Transverse colon (tissue), 4 donors: ENCODE measurements at regions of chr19 and their contacts with region 1.

Region 1: DNA sequence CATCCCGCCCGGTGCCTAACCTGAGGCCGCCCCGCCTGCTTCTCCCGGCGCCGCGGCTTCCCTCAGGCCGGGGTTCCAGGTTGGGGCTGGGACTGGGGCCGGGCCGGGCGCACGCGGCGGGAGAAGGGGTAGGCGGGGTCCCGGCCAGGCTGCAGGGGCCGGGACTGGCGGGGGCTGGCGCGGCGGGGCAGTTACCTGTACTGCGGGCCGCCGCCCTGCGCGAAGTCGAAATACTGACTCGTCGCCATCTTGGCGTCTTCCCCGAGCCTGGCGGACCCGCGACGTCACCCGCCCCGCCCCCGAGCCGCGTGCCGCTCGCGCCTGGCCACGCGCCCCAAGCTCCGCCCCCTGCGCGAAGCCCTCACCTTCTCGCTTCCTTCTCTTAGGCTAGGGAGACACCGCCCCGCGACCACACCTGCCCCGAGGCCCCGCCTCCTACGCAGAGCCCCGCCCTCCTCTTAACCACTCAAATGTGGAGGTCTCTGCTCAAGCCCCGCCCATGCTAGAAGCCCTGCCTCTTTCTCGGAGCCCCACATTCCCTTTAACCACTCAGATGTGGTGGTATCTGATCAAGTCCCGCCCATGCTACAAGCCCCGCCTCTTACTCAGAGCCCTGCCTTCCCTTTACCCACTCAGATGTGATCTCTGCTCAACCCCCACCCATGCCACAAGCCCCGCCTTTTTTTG is at the start of gene ZFR2:
- DNase-seq: no peak
- H3K4me3 ChIP-seq: peak within 1 kb of the TSS in 1 of 4 donors; percentile 18
- H3K27ac ChIP-seq: no peak within 1 kb of the TSS
- H3K4me1 ChIP-seq: peaks cover 0 to 4% (median 0%) of the 10 kb centered on the region in 4 donors
- H3K27me3 ChIP-seq: peaks cover 57% of the 10 kb centered on the region
- CTCF ChIP-seq: no peak
- EP300 ChIP-seq: no peak
- POLR2A ChIP-seq: no peak
- total RNA-seq, gene ZFR2: not detected

Region 2: GRCh38 chr19:3700221-3701032 is 168.5 kb before region 1 on chr19 and contains the start of gene PIP5K1C:
- in situ Hi-C with region 1: no loop called
- intact Hi-C with region 1: no loop called
- DNase-seq: peak; percentile 95
- H3K4me3 ChIP-seq: peak within 1 kb of the TSS; percentile 69 to 99 (median 94)
- H3K27ac ChIP-seq: peak within 1 kb of the TSS; percentile 84 to 93 (median 87)
- H3K4me1 ChIP-seq: peaks cover 10 to 28% (median 22%) of the 10 kb centered on the region in 4 donors
- H3K27me3 ChIP-seq: no peaks in the 10 kb centered on the region
- CTCF ChIP-seq: peak; percentile 73 to 89 (median 79)
- EP300 ChIP-seq: no peak
- POLR2A ChIP-seq: no peak
- total RNA-seq, gene PIP5K1C: 25.4 to 91.1 (median 36.4) TPM

Region 3: GRCh38 chr19:3914199-3914598 is 45.3 kb after region 1 on chr19:
- in situ Hi-C with region 1: no loop called
- intact Hi-C with region 1: no loop called
- DNase-seq: no peak
- H3K4me3 ChIP-seq: no peak overlapping the region
- H3K27ac ChIP-seq: no peak overlapping the region
- H3K4me1 ChIP-seq: no peaks in the 10 kb centered on the region
- H3K27me3 ChIP-seq: no peaks in the 10 kb centered on the region
- CTCF ChIP-seq: no peak
- EP300 ChIP-seq: no peak
- POLR2A ChIP-seq: no peak

Region 4: DNA sequence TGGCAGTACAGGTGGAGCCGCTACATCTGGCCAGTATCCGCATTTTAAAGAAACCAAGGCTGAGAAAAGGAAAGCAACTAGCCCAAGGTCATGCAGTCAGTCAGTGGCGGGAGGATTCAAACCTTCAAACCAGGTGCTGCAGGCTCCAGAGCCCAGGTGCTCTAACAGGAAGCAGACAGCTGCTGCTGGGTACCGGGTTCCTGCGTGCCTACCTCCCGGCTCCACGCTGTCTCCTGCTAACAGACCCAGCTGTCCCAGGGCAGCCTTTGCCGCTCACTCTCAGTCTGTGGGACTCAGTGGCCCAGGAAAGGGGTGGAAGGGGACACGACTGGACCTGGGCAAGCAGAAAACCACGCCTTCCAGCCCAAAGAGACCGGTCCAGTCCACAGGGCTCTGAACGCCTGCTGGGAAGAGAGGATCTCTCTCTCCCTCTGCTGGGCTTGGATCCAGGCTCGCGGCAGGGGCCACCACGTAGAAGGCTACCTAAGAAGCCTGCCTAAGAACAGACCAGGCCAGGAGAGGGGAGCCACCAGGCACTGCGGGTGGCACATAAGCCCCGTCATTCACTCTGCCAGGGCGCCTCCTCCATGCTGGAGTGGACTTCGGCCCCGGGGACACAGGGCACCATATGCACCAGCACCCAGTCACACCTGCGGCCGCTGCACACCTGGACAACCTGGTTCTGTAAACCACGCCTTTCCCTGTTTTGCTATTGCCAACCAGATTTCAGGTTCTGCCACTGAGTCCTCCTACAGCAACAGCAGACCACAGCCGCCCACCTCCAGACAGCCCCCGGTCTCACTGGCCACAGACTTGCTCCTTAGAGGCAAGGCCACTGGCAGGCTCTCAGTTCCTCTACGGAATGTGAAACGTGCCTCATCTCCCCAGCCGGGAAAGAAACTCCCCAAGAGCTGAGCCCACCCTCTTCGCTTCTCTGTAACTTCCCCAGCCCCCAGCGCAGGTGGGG is 97.4 kb after region 1 on chr19:
- in situ Hi-C with region 1: no loop called
- intact Hi-C with region 1: no loop called
- DNase-seq: peak; percentile 89
- H3K4me3 ChIP-seq: peak overlapping the region in 1 of 4 donors; percentile 31
- H3K27ac ChIP-seq: peak overlapping the region; percentile 96 to 99 (median 98)
- H3K4me1 ChIP-seq: peaks cover 41 to 54% (median 50%) of the 10 kb centered on the region in 4 donors
- H3K27me3 ChIP-seq: no peaks in the 10 kb centered on the region
- CTCF ChIP-seq: no peak
- EP300 ChIP-seq: no peak
- POLR2A ChIP-seq: no peak

Region 5: DNA sequence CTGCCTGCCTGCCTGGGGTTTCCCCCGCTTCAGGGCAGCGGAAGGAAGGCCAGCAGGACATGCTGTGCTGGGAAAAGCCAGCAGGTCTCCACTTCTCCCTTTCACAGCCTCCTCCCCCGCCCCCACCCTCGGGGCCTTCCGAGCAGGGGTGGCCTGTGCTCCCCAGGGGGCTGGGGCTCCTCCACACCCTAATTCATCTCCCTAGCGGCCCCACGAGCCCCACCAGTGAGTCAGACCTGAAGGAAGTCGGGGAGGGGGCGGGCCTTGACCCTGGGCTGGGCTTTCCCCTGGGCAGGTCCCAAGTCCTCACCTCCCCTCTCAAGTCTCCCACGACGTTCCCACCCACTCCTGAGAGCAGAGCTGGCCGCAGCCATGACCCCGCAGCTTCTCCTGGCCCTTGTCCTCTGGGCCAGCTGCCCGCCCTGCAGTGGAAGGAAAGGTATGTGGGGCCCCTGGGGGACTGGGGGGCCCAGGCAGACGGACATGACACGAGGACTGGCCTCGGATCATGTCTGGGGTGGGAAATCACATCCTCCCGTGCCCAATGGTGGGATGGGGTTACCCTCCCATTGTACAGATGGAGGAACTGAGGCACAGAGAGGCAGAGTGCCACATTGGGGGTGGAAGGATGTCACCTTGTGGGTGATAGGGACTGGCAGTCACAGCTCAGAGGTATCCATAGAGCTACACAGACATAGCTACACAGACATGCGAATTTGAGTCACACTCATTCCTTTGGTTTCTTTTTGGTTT is 360.4 kb after region 1 on chr19 and contains the start of gene EBI3:
- in situ Hi-C with region 1: loop called in 1 of 4 experiments (anchors 10 kb)
- intact Hi-C with region 1: no loop called
- DNase-seq: peak; percentile 34
- H3K4me3 ChIP-seq: no peak within 1 kb of the TSS
- H3K27ac ChIP-seq: no peak within 1 kb of the TSS
- H3K4me1 ChIP-seq: no peaks in the 10 kb centered on the region
- H3K27me3 ChIP-seq: peaks cover 60% of the 10 kb centered on the region
- CTCF ChIP-seq: no peak
- EP300 ChIP-seq: no peak
- POLR2A ChIP-seq: no peak
- total RNA-seq, gene EBI3: 0.96 to 3.7 (median 3.7) TPM in 3 of 4 donors, not detected in the other